ENCODE measurements at regions of chr15 and their contacts with region 1.

Region 1: GRCh38 chr15:78909791-78910228 is 35.0 kb downstream of the CTSH start:
- DNase-seq: peak; percentile 53
- ATAC-seq: peak; percentile 69
- H3K4me3 Mint-ChIP-seq: no peak overlapping the region
- H3K27ac Mint-ChIP-seq: peak overlapping the region; percentile 26
- H3K4me1 Mint-ChIP-seq: peaks cover 8% of the 10 kb centered on the region
- H3K27me3 Mint-ChIP-seq: no peaks in the 10 kb centered on the region

Region 2: DNA sequence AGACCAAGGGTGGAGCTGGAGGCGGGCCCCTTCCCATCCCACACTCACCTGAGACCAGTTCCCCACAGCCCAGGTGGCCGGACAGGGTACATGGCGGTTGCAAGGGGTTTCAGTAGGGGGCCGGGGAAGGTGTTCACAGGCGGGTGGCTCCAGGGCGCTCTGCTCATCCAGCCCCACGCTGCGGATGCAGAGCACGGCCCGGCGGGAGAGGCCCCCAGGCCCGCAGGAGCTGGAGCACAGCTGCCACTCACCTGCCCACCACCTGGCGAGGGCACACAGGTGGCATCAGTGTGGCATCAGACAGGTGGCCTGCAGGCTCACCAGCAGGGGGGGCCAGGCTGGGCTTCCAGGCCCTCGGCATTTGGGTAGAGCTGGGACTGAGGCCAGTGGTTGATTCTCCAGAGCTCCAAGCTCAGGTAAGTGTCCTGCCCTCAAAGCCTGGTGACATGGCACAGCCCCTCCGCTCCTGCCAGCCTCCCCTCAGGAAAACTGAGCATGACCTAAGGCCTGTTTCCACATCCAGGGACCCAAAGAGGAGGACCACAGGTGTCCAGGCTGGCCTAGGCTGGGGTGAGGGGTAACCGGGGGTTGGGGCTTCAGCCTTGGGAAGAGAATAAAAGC is 142.4 kb before region 1 on chr15:
- CTCF ChIA-PET with region 1: no interaction called
- POLR2A ChIA-PET with region 1: no interaction called
- intact Hi-C with region 1: no loop called
- DNase-seq: no peak
- ATAC-seq: no peak
- H3K4me3 Mint-ChIP-seq: no peak overlapping the region
- H3K27ac Mint-ChIP-seq: no peak overlapping the region
- H3K4me1 Mint-ChIP-seq: peaks cover 2% of the 10 kb centered on the region
- H3K27me3 Mint-ChIP-seq: no peaks in the 10 kb centered on the region

Region 3: DNA sequence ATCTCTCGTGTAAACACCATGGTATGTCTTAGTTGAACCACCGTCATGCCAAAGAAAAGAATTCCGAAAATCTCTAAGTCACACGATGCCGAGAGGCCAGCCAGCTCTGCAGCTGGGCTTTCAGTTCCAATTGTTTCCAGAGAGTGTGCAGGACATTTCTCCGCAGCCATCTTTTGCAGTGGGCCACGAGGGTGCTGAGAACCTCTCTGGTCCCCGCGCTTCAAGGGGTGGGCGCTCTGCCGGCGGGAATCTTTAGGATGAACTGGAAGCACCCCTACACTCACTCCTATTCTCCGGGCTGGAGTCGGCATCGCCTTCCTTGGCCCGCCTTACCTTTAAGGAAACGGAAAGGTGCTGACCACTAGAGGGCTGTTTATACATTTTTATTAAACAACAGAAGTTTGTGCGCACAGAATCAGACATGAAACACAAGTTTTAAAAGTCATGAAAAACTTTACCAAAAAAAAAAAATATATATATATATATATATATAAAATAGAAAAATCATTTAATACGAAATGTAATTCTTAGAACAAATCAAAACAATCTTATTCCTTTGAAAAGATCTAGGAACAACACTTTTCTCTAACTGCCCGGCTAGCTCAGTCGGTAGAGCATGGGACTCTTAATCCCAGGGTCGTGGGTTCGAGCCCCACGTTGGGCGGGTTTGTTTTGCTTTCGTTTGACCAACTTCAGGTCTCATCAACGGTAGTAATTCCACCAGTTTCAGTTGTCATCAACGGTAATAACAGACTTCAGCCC is 49.7 kb before region 1 on chr15:
- CTCF ChIA-PET with region 1: interaction called, 3 read pairs
- POLR2A ChIA-PET with region 1: no interaction called
- intact Hi-C with region 1: loop called in 1 of 2 experiments (anchors 5 kb)
- DNase-seq: peak; percentile 88
- ATAC-seq: peak; percentile 79
- H3K4me3 Mint-ChIP-seq: peak overlapping the region; percentile 77
- H3K27ac Mint-ChIP-seq: peak overlapping the region; percentile 78
- H3K4me1 Mint-ChIP-seq: peaks cover 8% of the 10 kb centered on the region
- H3K27me3 Mint-ChIP-seq: no peaks in the 10 kb centered on the region

Region 4: DNA sequence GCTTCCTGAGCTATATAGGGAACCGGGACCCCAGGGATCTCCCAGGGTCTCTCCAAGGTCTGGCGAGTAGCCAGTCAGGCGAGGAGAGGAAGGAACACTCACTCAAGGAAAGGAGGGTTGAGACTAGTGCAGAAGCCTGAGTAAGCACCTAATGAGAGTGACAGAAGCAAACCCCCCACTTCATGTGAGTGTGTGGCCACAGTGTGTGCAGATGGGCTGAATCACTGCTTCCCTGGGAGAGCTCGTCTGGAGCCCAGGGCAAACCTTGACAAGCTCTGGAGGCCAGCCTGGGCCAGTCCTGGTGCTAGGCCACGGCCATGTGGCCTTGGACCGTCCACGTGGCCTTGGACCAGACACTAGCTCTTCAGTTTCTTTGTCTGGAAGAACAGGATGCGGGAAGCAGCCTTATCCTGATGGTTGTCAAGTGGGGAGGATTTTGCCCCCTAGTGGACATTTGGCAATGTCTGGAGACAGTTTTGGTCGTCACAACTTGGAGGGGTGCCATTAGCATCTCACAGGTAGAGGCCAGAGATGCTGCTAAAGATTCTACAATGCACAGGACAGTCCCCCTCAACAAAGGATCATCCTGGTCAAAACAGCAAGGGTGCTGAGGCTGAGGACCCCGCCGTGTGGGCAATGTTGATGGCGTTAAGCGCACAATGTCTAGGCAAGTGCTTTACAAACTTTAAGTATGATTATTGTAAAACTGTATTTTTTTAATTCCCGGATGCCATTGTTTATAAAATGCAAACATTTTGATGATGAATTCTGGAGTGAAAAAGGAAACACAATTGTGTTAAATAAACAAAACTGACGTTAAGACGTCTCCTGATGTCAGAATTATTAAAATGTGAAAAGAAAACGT is 69.9 kb after region 1 on chr15:
- CTCF ChIA-PET with region 1: interaction called, 8 read pairs
- POLR2A ChIA-PET with region 1: no interaction called
- intact Hi-C with region 1: loop called in 1 of 2 experiments (anchors 1 kb)
- DNase-seq: peak; percentile 58
- ATAC-seq: peak; percentile 55
- H3K4me3 Mint-ChIP-seq: no peak overlapping the region
- H3K27ac Mint-ChIP-seq: no peak overlapping the region
- H3K4me1 Mint-ChIP-seq: peaks cover 2% of the 10 kb centered on the region
- H3K27me3 Mint-ChIP-seq: peaks cover 5% of the 10 kb centered on the region

Region 5: GRCh38 chr15:79028411-79028964 is 118.7 kb after region 1 on chr15:
- CTCF ChIA-PET with region 1: interaction called, 3 read pairs
- POLR2A ChIA-PET with region 1: no interaction called
- intact Hi-C with region 1: loop called in 1 of 2 experiments (anchors 5 kb)
- DNase-seq: peak; percentile 61
- ATAC-seq: no peak
- H3K4me3 Mint-ChIP-seq: no peak overlapping the region
- H3K27ac Mint-ChIP-seq: no peak overlapping the region
- H3K4me1 Mint-ChIP-seq: no peaks in the 10 kb centered on the region
- H3K27me3 Mint-ChIP-seq: peaks cover 5% of the 10 kb centered on the region